ENCODE measurements at regions of chr3 and their contacts with region 1.

Region 1: GRCh38 chr3:17023006-17023664 is 138.4 kb downstream of the PLCL2 start:
- DNase-seq: no peak
- H3K4me3 ChIP-seq: no peak overlapping the region
- H3K27ac ChIP-seq: no peak overlapping the region
- H3K4me1 ChIP-seq: peaks cover 0 to 4% of the 10 kb centered on the region in 2 donors
- H3K27me3 ChIP-seq: no peaks in the 10 kb centered on the region
- CTCF ChIP-seq: no peak
- POLR2A ChIP-seq: no peak

Region 2: GRCh38 chr3:16369276-16369675 is 653.9 kb before region 1 on chr3:
- intact Hi-C with region 1: no loop called
- DNase-seq: no peak
- H3K4me3 ChIP-seq: no peak overlapping the region
- H3K27ac ChIP-seq: peak overlapping the region in 1 of 5 donors; percentile 58
- H3K4me1 ChIP-seq: peaks cover 0 to 10% of the 10 kb centered on the region in 2 donors
- H3K27me3 ChIP-seq: no peaks in the 10 kb centered on the region
- CTCF ChIP-seq: no peak
- POLR2A ChIP-seq: no peak

Region 3: GRCh38 chr3:17233398-17233800 is 210.3 kb after region 1 on chr3:
- intact Hi-C with region 1: loop called in 1 of 2 experiments (anchors 10 kb)
- DNase-seq: peak in 6 of 7 donors; percentile 11 to 22 (median 18)
- H3K4me3 ChIP-seq: no peak overlapping the region
- H3K27ac ChIP-seq: no peak overlapping the region
- H3K4me1 ChIP-seq: peaks cover 0 to 3% of the 10 kb centered on the region in 2 donors
- H3K27me3 ChIP-seq: no peaks in the 10 kb centered on the region
- CTCF ChIP-seq: peak; percentile 52 to 92 (median 80)
- POLR2A ChIP-seq: no peak

Region 4: DNA sequence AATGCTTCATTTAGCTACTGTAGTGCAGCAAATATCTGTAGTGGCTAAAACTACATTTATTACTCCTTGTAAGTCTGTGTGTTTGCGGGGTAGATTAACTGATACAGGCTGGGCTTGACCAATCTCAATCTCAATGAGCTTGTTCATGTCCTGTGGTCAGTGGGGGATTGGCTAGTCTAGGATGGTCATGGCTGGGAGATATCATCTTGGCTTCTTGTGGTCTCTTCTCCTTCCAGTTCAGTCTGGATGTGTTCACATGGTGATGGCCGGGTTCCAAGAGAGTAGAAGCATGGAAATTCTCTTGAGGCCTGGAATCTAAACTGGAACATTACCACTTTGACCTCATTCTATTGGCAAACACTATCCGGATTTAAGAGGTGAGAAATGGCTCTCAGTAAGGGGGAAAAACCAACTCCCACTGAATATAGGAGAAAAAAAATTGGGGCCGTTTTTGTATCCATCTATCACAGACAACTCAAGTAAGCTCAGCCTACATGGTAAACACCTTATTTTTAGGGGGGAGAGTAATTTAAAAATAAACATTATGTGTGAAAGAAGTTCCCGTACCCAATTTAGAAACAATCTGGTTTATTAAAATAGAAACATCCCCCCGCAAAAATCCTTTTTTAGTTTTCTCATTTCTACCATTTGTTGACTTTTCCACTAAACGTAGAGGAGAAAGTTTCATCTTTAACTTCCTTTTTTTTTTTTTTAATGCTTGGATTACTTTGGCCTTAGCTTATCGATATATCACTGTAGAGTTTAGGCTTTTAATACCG is 1004.2 kb after region 1 on chr3:
- intact Hi-C with region 1: no loop called
- DNase-seq: no peak
- H3K4me3 ChIP-seq: no peak overlapping the region
- H3K27ac ChIP-seq: no peak overlapping the region
- H3K4me1 ChIP-seq: no peaks in the 10 kb centered on the region
- H3K27me3 ChIP-seq: no peaks in the 10 kb centered on the region
- CTCF ChIP-seq: no peak
- POLR2A ChIP-seq: no peak

Measured in adrenal gland (tissue), 19 donors.